ENCODE measurements at regions of chr16 and their contacts with region 1.

Region 1: GRCh38 chr16:3745751-3746355 is 28.5 kb upstream of the TRAP1 start:
- DNase-seq: no peak
- ATAC-seq: no peak
- H3K4me3 Mint-ChIP-seq: no peak overlapping the region
- H3K27ac Mint-ChIP-seq: no peak overlapping the region
- H3K4me1 Mint-ChIP-seq: peaks cover 5% of the 10 kb centered on the region
- H3K27me3 Mint-ChIP-seq: no peaks in the 10 kb centered on the region

Region 2: GRCh38 chr16:3797904-3798811 is 52.3 kb after region 1 on chr16:
- CTCF ChIA-PET with region 1: no interaction called
- POLR2A ChIA-PET with region 1: no interaction called
- intact Hi-C with region 1: loop called in 1 of 2 experiments (anchors 5 kb)
- DNase-seq: no peak
- ATAC-seq: peak; percentile 56
- H3K4me3 Mint-ChIP-seq: peak overlapping the region; percentile 4
- H3K27ac Mint-ChIP-seq: no peak overlapping the region
- H3K4me1 Mint-ChIP-seq: peaks cover 53% of the 10 kb centered on the region
- H3K27me3 Mint-ChIP-seq: no peaks in the 10 kb centered on the region

Region 3: DNA sequence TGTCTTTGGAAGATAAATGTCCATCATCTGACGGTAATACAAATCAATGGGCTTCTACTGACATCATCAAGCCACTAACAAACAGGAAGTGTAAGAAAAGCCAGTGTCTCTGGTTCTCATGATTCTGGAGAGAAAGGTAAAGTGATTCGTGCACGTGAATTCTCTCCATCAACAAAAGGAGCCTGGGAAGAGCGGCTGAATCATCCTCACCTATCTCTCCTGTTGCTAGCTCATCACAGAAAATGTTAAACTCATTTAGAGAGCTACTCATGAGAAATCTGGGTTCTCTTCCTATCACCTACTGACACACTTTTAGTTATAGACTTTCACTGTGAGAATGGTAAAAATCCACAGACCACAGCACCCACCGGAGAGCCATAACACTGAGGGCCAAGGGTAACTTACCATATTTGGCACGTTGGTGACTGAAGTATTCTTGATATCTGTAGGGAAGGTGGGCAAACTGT is 64.4 kb after region 1 on chr16:
- CTCF ChIA-PET with region 1: no interaction called
- POLR2A ChIA-PET with region 1: no interaction called
- intact Hi-C with region 1: no loop called
- DNase-seq: peak; percentile 61
- ATAC-seq: peak; percentile 81
- H3K4me3 Mint-ChIP-seq: no peak overlapping the region
- H3K27ac Mint-ChIP-seq: no peak overlapping the region
- H3K4me1 Mint-ChIP-seq: peaks cover 76% of the 10 kb centered on the region
- H3K27me3 Mint-ChIP-seq: no peaks in the 10 kb centered on the region